ENCODE measurements at regions of chr4 and their contacts with region 1.

Region 1: DNA sequence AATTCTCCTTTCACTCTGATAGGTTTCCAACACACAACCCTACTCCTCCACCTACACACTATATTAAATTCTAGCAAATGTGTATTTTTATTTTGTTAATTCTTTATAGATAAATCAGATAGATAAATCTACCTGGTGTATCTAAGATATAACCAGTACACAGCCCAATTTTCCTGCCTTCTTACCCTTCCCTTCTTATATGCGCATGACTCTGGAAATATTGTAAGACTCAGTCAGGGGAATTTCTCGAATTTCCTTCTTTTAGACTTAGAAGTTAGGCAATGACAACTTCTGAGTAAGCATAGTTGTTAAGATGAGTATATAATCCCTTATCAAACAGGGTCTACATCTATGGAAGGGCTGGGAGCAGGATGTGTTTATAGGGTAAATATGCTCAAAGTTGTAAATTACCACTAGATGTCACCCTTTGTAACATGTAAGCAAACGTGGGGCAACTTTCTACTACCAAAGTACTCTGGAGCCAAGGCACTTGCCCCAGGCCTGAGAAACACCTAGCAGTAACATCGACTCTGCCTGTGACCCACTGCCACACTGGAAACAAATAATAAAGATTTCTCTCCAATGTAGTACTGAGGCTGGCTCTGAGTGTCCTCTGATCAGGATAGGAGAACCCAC is 444.7 kb downstream of the IQCM start:
- DNase-seq: no peak
- ATAC-seq: peak; percentile 44 to 63 (median 56)
- H3K4me3 ChIP-seq: no peak overlapping the region
- H3K27ac ChIP-seq: no peak overlapping the region
- H3K4me1 ChIP-seq: no peaks in the 10 kb centered on the region
- H3K27me3 ChIP-seq: no peaks in the 10 kb centered on the region
- CTCF ChIP-seq: peak; percentile 27

Region 2: DNA sequence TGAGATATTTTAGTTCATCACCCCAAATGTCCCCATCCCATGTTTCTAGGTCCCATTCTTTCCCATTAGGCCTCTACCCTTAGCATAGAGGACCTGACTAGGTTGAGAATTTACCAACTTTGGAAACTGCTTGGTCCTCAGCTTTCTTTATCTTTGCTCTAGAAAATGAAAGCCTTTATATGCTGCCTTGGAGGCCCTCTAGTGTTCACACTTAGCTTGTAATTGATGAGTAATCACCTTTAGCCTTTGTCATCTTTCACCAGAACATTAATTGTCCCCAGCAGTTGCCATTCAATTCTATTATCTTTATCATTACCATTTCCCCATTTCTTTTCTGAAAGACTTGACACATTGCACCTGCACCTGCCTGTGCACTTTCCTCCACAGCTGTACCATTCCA is 339.5 kb before region 1 on chr4:
- intact Hi-C with region 1: no loop called
- DNase-seq: no peak
- ATAC-seq: peak in 2 of 4 donors; percentile 53 to 58
- H3K4me3 ChIP-seq: no peak overlapping the region
- H3K27ac ChIP-seq: no peak overlapping the region
- H3K4me1 ChIP-seq: no peaks in the 10 kb centered on the region
- H3K27me3 ChIP-seq: no peaks in the 10 kb centered on the region
- CTCF ChIP-seq: peak; percentile 50

Region 3: DNA sequence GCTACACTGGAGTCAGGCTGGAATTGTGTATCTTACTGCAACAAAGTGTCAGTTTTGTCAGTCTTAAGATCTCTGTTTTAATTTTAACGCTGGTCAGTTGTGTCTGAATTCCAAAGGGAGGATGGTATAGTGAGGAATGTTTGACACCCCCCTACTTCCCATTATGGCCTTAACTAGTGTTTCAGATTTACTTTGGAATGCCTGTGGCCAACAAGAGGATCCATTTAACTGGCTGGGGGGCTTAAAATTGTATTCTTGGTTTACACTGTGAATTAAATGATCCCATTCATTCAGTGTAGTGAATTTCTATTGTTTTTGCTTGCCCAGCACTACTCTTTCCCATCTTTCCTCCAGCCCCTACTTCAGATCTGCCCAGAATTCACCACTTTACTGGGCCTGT is 520.5 kb after region 1 on chr4:
- intact Hi-C with region 1: loop called (anchors 5 kb)
- DNase-seq: no peak
- ATAC-seq: no peak
- H3K4me3 ChIP-seq: no peak overlapping the region
- H3K27ac ChIP-seq: no peak overlapping the region
- H3K4me1 ChIP-seq: no peaks in the 10 kb centered on the region
- H3K27me3 ChIP-seq: no peaks in the 10 kb centered on the region
- CTCF ChIP-seq: no peak

Region 4: DNA sequence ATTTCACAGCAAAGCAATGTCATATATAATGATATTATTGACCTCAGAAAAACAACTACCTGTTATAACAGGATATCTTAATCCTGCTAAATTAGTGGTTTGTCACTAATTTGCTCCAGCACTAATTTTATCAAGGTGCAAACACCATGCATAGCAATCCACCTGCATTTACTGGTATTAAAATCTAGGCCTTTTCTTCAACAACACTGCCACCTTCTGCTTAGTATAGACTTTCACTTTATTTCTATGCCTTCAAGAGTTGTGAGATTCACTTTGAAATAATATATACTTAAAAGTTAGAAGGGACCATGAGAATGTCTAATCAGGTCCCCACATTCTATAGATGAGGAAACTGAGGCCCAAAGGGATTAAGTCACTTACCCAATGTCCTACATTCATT is 526.9 kb after region 1 on chr4:
- intact Hi-C with region 1: loop called (anchors 5 kb)
- DNase-seq: no peak
- ATAC-seq: no peak
- H3K4me3 ChIP-seq: no peak overlapping the region
- H3K27ac ChIP-seq: no peak overlapping the region
- H3K4me1 ChIP-seq: no peaks in the 10 kb centered on the region
- H3K27me3 ChIP-seq: no peaks in the 10 kb centered on the region
- CTCF ChIP-seq: peak; percentile 11